ENCODE measurements at regions of chr10 and their contacts with region 1.

Region 1: DNA sequence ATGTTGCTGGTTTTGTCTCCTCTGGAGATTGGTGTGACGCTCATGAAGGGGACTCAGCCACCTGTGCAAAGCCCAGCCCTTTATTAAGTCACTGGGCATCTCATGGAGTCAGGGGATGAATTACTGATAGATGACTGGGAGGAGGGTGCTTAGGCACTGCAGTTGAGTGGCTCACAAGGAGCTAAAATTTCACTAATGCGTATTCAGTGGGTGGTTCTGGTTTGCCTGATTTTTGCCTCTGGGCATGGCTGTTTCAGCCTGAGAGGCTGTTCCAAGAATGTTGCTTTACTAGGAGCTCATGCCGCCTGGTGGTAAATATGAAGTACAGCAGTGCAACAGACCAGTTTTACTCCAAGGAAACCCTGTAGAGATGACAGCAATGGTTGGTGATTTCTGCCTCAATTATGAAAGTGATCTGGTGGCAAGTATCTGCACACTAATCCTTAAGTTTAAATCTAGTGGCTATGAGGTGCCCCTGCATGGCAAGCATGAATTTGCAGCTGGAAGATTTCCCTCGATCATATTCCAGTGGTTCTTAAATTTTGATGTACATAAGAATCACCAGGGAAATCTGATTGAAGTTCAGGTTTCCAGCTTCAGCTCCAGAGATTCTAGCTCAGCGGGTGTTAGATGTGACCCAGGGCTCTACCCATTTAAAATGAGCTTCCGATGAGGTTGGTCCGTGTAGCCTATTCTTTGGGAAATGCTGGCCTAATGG is 19.9 kb downstream of the ACTA2 start:
- DNase-seq: peak in 1 of 2 donors; percentile 59
- ATAC-seq: peak; percentile 69 to 80 (median 78)
- H3K4me3 ChIP-seq: no peak overlapping the region
- H3K27ac ChIP-seq: peak overlapping the region in 7 of 10 donors; percentile 4 to 82 (median 45)
- H3K4me1 ChIP-seq: peaks cover 3 to 41% (median 19%) of the 10 kb centered on the region in 9 donors
- H3K27me3 ChIP-seq: no peaks in the 10 kb centered on the region
- CTCF ChIP-seq: peak; percentile 76 to 92 (median 87)

Region 2: GRCh38 chr10:88835096-88835909 is 97.4 kb before region 1 on chr10:
- intact Hi-C with region 1: loop called (anchors 1 to 5 kb)
- DNase-seq: peak; percentile 85 to 90
- ATAC-seq: peak; percentile 80 to 97 (median 94)
- H3K4me3 ChIP-seq: no peak overlapping the region
- H3K27ac ChIP-seq: peak overlapping the region in 1 of 10 donors; percentile 63
- H3K4me1 ChIP-seq: peaks cover 0 to 36% (median 0%) of the 10 kb centered on the region in 9 donors
- H3K27me3 ChIP-seq: peaks cover 0 to 13% (median 0%) of the 10 kb centered on the region in 7 donors
- CTCF ChIP-seq: peak; percentile 77 to 94 (median 88)

Region 3: DNA sequence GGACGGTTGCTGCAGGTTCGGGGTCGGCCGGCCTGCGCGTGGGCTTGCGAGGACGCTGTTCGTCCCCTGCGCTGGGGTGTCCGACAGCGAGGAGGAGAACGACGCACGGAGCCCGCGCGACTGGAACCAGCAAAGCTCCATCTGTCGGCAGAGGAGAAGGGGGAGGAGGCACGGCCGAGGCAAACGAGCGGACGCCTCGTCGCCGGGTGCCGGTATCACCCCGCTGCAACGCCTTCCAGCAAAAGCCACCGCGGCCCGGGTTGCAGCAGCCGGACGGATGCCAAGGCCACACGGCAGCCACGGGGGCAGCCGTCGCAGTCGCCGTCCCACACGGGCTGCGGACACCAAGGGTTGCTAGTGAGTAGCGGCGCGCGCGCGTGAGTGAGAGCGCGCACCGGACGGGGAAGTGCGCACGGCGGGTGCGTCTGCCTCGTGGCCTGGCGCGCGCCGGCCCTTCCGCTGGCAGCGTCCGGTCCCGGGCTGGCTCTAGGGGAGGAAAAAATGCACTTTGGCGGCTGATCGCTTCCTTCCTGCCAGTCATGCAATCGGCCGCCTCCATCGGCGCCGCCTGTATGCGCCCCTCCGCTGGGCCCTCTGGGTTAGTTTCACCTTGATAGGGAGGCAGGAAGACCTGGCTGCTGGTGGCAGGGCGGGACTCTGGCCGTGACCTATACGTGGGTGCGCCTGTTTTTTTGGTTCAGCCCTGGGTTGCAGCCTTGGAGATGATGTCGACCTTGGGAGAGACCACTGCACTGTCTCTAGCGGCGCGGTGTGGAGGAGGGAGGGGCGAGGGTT is 52.2 kb before region 1 on chr10:
- intact Hi-C with region 1: loop called in 6 of 10 experiments (anchors 2 to 5 kb)
- DNase-seq: peak; percentile 84 to 85
- ATAC-seq: peak; percentile 93 to 97 (median 96)
- H3K4me3 ChIP-seq: peak overlapping the region; percentile 60 to 87 (median 79)
- H3K27ac ChIP-seq: peak overlapping the region; percentile 85 to 94 (median 90)
- H3K4me1 ChIP-seq: peaks cover 0 to 59% (median 29%) of the 10 kb centered on the region in 9 donors
- H3K27me3 ChIP-seq: peaks cover 0 to 6% (median 0%) of the 10 kb centered on the region in 7 donors
- CTCF ChIP-seq: peak in 7 of 9 donors; percentile 10 to 54 (median 34)

Region 4: GRCh38 chr10:88886557-88886956 is 46.1 kb before region 1 on chr10:
- intact Hi-C with region 1: loop called in 5 of 10 experiments (anchors 2 to 5 kb)
- DNase-seq: no peak
- ATAC-seq: no peak
- H3K4me3 ChIP-seq: no peak overlapping the region
- H3K27ac ChIP-seq: no peak overlapping the region
- H3K4me1 ChIP-seq: peaks cover 0 to 56% (median 12%) of the 10 kb centered on the region in 9 donors
- H3K27me3 ChIP-seq: no peaks in the 10 kb centered on the region
- CTCF ChIP-seq: no peak

Region 5: GRCh38 chr10:88990384-88991160 is 57.9 kb after region 1 on chr10 and contains the start of gene FAS:
- intact Hi-C with region 1: loop called in 9 of 10 experiments (anchors 1 to 5 kb)
- DNase-seq: peak; percentile 67 to 81
- ATAC-seq: peak; percentile 68 to 90 (median 74)
- H3K4me3 ChIP-seq: peak within 1 kb of the TSS; percentile 53 to 90 (median 83)
- H3K27ac ChIP-seq: peak within 1 kb of the TSS; percentile 86 to 97 (median 96)
- H3K4me1 ChIP-seq: peaks cover 0 to 80% (median 34%) of the 10 kb centered on the region in 9 donors
- H3K27me3 ChIP-seq: no peaks in the 10 kb centered on the region
- CTCF ChIP-seq: no peak
- total RNA-seq, gene FAS: 2.5 to 10.1 (median 3.7) TPM

Region 6: DNA sequence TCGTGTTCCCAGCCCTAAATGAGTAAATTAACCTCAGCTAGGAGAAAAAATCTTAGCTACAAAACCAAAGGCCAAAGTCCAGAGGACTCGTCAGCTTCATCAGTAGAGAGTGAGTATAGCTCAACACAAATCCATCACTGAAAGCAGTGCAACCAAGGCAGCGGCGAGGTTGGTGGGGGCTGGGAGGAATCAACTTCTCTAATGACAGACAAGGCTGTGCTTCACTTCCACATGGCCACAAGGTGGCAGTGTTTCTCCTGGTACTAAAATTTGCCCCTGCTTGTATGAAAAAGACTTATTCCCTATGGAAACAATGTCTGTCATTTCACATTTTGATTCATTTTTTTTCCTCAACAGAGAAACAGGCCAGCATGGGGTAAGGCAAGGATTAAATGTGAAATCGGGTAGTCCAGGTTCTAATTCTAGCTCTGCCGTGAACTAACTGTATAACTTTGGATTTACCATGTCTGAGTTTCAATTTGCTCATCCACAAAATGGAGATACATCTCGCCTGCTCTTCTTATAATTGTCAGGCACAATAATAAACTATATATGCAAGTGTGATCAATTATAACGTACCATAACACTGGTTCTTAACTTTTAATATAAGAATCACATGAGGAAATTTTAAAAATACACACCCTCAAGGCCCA is 97.2 kb after region 1 on chr10:
- intact Hi-C with region 1: loop called in 1 of 10 experiments (anchors 5 kb)
- DNase-seq: peak; percentile 56 to 87
- ATAC-seq: peak; percentile 60 to 81 (median 72)
- H3K4me3 ChIP-seq: no peak overlapping the region
- H3K27ac ChIP-seq: peak overlapping the region in 2 of 10 donors; percentile 15 to 51
- H3K4me1 ChIP-seq: peaks cover 0 to 38% (median 12%) of the 10 kb centered on the region in 9 donors
- H3K27me3 ChIP-seq: no peaks in the 10 kb centered on the region
- CTCF ChIP-seq: peak; percentile 86 to 96 (median 90)

Region 7: DNA sequence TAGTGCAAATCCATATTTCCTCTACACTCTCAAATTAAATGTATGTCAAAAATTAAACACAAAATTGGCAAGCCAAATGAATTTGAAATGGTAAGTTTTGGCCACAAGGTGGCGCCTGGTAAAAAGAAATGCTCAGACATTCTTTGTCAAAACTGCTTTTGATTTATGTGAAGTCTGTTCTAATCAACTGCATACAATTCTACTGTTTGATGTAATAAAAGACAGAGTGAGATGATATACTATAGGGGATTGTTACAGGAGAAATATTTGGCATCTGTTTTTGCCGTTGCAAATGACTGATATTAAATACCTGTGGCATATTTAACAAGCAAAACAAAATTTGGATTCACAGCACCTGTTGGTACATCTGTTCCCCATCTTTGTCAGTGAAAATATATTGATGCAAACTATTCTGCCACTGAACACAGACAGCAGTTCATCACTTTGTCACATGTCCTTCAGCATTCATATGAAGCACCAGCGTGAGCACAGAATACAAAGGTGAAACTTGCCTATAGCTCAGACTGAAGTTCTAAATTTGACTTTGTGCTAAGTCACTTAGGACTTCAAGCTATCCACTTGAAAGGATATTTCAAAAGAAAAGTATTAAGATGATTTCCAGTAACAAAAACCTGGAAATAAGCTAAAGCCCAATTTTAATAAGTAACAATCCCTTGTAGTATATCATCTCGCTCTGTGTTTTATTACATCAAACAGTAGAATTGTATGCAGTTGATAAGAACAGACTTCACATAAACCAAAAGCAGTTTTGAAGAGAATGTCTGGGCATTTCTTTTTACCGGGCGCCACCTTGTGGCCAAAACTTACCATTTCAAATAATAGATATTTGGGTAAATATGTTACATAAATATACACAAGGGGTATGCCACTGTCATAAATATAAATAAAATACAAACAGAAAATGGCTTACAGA is 284.6 kb after region 1 on chr10:
- intact Hi-C with region 1: loop called (anchors 2 to 10 kb)
- DNase-seq: peak in 1 of 2 donors; percentile 53
- ATAC-seq: peak in 3 of 8 donors; percentile 49 to 69 (median 55)
- H3K4me3 ChIP-seq: peak overlapping the region in 2 of 10 donors; percentile 3 to 4
- H3K27ac ChIP-seq: peak overlapping the region in 8 of 10 donors; percentile 10 to 61 (median 31)
- H3K4me1 ChIP-seq: peaks cover 0 to 16% (median 8%) of the 10 kb centered on the region in 9 donors
- H3K27me3 ChIP-seq: no peaks in the 10 kb centered on the region
- CTCF ChIP-seq: peak; percentile 72 to 87 (median 82)

Measured in heart right ventricle (tissue), 16 donors.